Calu3 (cell line): ENCODE measurements at regions of chr6 and their contacts with region 1.

Region 1: DNA sequence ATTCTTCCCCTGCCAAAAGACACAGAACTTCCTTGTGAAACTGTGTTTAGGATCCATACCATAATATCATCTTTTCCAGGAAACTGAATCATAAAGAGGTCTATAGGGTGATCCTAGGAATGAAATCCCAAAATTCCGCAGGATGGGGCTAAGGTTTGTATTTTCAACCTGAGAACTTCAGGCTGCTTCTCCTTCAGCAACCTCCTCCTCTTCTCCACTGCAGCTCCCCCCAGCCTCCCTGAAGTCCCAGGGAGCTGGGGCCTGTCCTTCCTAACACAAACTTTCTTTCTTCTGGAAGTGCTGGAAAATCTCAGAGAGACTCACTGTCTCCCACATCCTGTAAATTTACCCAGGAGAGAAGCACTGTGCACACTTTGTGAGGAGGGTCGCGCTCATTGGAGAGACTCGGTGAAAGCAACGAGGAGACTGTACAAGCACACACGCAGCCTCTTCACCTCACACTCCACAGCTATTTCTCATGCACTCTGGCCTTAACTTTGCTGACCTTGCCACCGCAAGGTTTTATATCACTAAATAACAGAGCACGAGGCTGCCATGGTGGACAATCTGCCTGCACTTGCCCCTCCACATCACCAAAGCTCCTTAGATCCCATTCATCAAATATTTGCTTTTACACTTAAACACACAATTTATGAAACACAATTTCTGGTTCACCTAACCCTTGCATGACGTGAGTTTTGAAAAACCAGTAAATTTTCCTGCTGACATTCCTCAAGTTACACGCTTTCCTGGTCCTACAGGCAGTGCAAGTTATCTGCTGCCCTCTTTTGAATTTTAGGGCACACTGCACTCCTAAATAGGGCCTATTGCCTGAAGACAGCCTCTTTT is 14.3 kb downstream of the ID4 start:
- DNase-seq: peak; percentile 72
- H3K4me3 Mint-ChIP-seq: peak overlapping the region; percentile 40
- H3K27ac Mint-ChIP-seq: peak overlapping the region; percentile 77
- H3K4me1 Mint-ChIP-seq: peaks cover 13% of the 10 kb centered on the region
- H3K27me3 Mint-ChIP-seq: no peaks in the 10 kb centered on the region
- CTCF ChIP-seq: peak; percentile 87

Region 2: GRCh38 chr6:18990059-18990978 is 861.1 kb before region 1 on chr6:
- CTCF ChIA-PET with region 1: no interaction called
- intact Hi-C with region 1: loop called (anchors 10 kb)
- DNase-seq: peak; percentile 66
- H3K4me3 Mint-ChIP-seq: no peak overlapping the region
- H3K27ac Mint-ChIP-seq: no peak overlapping the region
- H3K4me1 Mint-ChIP-seq: no peaks in the 10 kb centered on the region
- H3K27me3 Mint-ChIP-seq: no peaks in the 10 kb centered on the region
- CTCF ChIP-seq: peak; percentile 32

Region 3: GRCh38 chr6:19204443-19204842 is 647.0 kb before region 1 on chr6:
- CTCF ChIA-PET with region 1: no interaction called
- intact Hi-C with region 1: loop called (anchors 10 kb)
- DNase-seq: no peak
- H3K4me3 Mint-ChIP-seq: no peak overlapping the region
- H3K27ac Mint-ChIP-seq: no peak overlapping the region
- H3K4me1 Mint-ChIP-seq: no peaks in the 10 kb centered on the region
- H3K27me3 Mint-ChIP-seq: no peaks in the 10 kb centered on the region
- CTCF ChIP-seq: no peak

Region 4: DNA sequence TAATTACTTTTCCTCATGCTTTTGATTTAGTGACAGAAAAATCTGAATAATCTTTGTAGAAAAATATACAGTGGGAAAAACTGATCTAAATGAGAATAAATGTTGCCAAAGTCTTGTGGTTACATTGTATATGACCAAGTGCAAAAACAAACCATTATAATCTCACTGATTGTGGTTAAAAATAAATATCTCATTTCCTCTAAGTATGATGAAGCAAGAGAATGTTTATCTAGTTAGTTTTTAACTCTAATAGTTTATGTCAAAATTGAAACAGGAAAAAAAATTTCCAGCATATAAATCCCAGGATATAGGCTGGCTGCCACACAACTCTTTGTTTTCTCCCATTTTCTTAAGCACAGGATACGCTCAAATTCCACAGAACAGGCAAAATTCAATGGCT is 407.0 kb before region 1 on chr6:
- CTCF ChIA-PET with region 1: interaction called, 5 read pairs
- intact Hi-C with region 1: loop called (anchors 10 kb)
- DNase-seq: no peak
- H3K4me3 Mint-ChIP-seq: no peak overlapping the region
- H3K27ac Mint-ChIP-seq: no peak overlapping the region
- H3K4me1 Mint-ChIP-seq: peaks cover 22% of the 10 kb centered on the region
- H3K27me3 Mint-ChIP-seq: no peaks in the 10 kb centered on the region
- CTCF ChIP-seq: no peak

Region 5: DNA sequence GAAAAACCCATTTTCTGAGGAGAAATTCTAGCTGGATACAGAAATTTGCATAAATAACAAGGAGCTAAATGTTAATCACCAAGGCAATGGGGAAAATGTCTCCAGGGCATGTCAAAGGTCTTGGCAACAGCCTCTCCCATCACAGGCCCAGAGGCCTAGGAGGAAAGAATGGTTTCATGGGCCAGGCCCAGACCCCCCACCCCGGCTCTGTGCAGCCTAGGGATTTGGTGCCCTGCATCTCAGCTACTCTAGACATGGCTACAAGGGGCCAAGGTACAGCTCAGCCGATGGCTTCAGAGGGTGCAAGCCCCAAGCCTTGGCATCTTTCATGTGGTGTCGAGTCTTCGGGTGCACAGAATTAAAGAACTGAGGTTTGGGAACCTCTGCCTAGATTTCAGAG is 335.5 kb before region 1 on chr6:
- CTCF ChIA-PET with region 1: no interaction called
- intact Hi-C with region 1: no loop called
- DNase-seq: no peak
- H3K4me3 Mint-ChIP-seq: no peak overlapping the region
- H3K27ac Mint-ChIP-seq: no peak overlapping the region
- H3K4me1 Mint-ChIP-seq: no peaks in the 10 kb centered on the region
- H3K27me3 Mint-ChIP-seq: no peaks in the 10 kb centered on the region
- CTCF ChIP-seq: no peak

Region 6: DNA sequence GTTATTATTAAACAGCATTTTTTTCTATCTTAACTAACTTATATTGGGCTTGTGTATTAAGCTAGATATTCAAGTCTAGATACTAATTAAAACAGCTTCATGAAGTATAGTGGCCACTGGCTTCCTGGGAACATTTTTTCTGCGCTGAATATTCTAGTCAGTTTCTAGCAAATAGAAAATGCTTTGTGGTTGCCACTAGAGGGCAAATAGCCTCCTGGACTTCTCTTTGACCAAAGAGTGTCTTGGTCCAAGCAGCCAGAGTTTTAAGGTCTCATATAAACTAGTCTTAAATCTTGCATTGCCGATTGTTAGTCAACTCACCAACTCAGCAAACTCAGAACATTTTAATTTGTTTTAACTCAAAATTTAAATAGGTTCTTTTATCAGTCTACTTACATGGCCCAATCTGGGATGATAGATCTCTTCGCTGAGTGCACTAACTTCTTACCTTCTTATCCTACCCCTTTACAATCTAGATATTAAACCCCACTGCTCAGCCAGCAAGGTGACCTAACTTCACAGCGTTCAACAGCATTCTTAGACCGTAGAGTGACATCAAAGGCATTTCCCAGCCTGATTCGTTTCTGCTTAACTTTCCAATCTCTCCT is 38.8 kb before region 1 on chr6:
- CTCF ChIA-PET with region 1: interaction called, 3 read pairs
- intact Hi-C with region 1: loop called (anchors 1 kb)
- DNase-seq: no peak
- H3K4me3 Mint-ChIP-seq: no peak overlapping the region
- H3K27ac Mint-ChIP-seq: no peak overlapping the region
- H3K4me1 Mint-ChIP-seq: peaks cover 13% of the 10 kb centered on the region
- H3K27me3 Mint-ChIP-seq: no peaks in the 10 kb centered on the region
- CTCF ChIP-seq: peak; percentile 82

Region 7: DNA sequence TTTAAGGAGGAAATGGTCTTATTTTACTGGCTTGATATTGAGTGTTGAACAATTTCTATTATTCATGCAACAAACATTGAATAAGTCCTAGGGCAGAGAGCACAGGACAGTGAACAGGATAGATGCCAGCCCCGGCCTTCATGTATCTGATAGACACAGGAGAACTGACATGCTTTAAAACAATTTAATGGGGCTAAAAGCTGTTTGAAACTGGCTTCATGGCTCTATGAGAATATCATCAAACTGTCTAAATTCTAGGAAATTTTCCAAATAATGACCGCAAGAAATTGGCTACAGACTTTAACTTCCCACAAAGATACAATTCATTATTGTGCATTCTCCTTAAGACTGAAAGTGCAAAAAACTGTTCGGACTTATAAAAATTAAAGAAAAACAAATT is 54.7 kb after region 1 on chr6:
- CTCF ChIA-PET with region 1: no interaction called
- intact Hi-C with region 1: no loop called
- DNase-seq: no peak
- H3K4me3 Mint-ChIP-seq: no peak overlapping the region
- H3K27ac Mint-ChIP-seq: no peak overlapping the region
- H3K4me1 Mint-ChIP-seq: peaks cover 11% of the 10 kb centered on the region
- H3K27me3 Mint-ChIP-seq: peaks cover 9% of the 10 kb centered on the region
- CTCF ChIP-seq: no peak

Region 8: GRCh38 chr6:20417819-20418218 is 566.4 kb after region 1 on chr6:
- CTCF ChIA-PET with region 1: no interaction called
- intact Hi-C with region 1: no loop called
- DNase-seq: no peak
- H3K4me3 Mint-ChIP-seq: no peak overlapping the region
- H3K27ac Mint-ChIP-seq: no peak overlapping the region
- H3K4me1 Mint-ChIP-seq: peaks cover 40% of the 10 kb centered on the region
- H3K27me3 Mint-ChIP-seq: no peaks in the 10 kb centered on the region
- CTCF ChIP-seq: no peak